PC-9 (cell line): ENCODE measurements at regions of chr7 and their contacts with region 1.

Region 1: GRCh38 chr7:134514663-134515062 is 12.7 kb upstream of the AKR1B10 start:
- DNase-seq: peak; percentile 35 to 78
- H3K4me3 ChIP-seq: no peak overlapping the region
- H3K27ac ChIP-seq: peak overlapping the region; percentile 94
- H3K4me1 ChIP-seq: peaks cover 69% of the 10 kb centered on the region
- H3K27me3 ChIP-seq: no peaks in the 10 kb centered on the region
- CTCF ChIP-seq: peak; percentile 97

Region 2: GRCh38 chr7:132705146-132705545 is 1809.5 kb before region 1 on chr7:
- CTCF ChIA-PET with region 1: interaction called, 12 read pairs
- POLR2A ChIA-PET with region 1: no interaction called
- intact Hi-C with region 1: no loop called
- DNase-seq: no peak
- H3K4me3 ChIP-seq: no peak overlapping the region
- H3K27ac ChIP-seq: no peak overlapping the region
- H3K4me1 ChIP-seq: no peaks in the 10 kb centered on the region
- H3K27me3 ChIP-seq: peaks cover 80% of the 10 kb centered on the region
- CTCF ChIP-seq: no peak

Region 3: GRCh38 chr7:134140889-134141867 is 373.5 kb before region 1 on chr7:
- CTCF ChIA-PET with region 1: interaction called, 3 read pairs
- POLR2A ChIA-PET with region 1: no interaction called
- intact Hi-C with region 1: loop called (anchors 5 kb)
- DNase-seq: peak; percentile 45 to 63
- H3K4me3 ChIP-seq: no peak overlapping the region
- H3K27ac ChIP-seq: no peak overlapping the region
- H3K4me1 ChIP-seq: no peaks in the 10 kb centered on the region
- H3K27me3 ChIP-seq: no peaks in the 10 kb centered on the region
- CTCF ChIP-seq: peak; percentile 94

Region 4: DNA sequence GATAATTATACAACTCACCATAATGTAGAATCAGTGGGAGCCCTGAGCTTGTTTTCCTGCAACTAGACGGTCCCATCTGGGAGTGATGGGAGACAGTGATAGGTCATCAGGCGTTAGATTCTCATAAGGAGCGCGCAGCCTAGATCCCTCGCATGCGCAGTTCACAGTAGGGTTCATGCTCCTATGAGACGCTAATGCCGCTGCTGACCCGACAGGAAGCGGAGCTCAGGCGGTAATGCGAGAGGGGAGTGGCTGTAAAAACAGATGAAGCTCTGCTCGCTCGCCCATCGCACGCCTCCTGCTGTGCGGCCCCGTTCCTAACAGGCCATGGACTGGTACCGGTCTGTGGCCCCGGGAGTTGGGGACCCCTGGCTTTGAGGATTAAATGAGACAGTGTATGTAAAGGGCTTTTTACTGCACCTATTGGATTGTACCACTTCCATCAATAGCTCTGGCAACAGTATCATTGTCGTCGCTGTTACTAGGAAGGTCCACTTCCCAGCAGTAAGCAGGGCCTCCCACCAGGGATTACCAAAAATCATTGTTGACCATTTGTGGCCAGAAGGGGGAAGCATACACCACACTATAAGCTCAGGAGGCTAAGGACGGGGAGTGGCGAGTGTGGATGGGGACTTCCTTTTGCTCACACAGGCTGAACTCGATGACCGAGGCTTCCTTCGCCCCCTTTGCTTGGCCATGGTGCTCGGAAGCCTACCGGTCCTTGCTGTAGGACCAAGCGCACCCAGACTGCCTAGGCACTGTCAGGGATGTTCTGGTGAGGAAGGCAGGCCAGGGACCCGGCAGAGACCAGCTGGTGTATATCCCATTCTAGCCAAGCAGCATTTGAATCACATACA is 82.1 kb before region 1 on chr7:
- CTCF ChIA-PET with region 1: interaction called, 33 read pairs
- POLR2A ChIA-PET with region 1: interaction called, 11 read pairs
- intact Hi-C with region 1: loop called (anchors 1 kb)
- DNase-seq: peak; percentile 88 to 91
- H3K4me3 ChIP-seq: peak overlapping the region; percentile 51
- H3K27ac ChIP-seq: peak overlapping the region; percentile 80
- H3K4me1 ChIP-seq: peaks cover 48% of the 10 kb centered on the region
- H3K27me3 ChIP-seq: no peaks in the 10 kb centered on the region
- CTCF ChIP-seq: peak; percentile 96

Region 5: GRCh38 chr7:134480736-134481135 is 33.9 kb before region 1 on chr7:
- CTCF ChIA-PET with region 1: interaction called, 4 read pairs
- POLR2A ChIA-PET with region 1: interaction called, 5 read pairs
- intact Hi-C with region 1: loop called (anchors 1 kb)
- DNase-seq: peak; percentile 59 to 94
- H3K4me3 ChIP-seq: peak overlapping the region; percentile 37; the same call in 1 of the 2 replicates
- H3K27ac ChIP-seq: peak overlapping the region; percentile 88
- H3K4me1 ChIP-seq: peaks cover 65% of the 10 kb centered on the region
- H3K27me3 ChIP-seq: no peaks in the 10 kb centered on the region
- CTCF ChIP-seq: no peak

Region 6: GRCh38 chr7:134570934-134571495 is 56.4 kb after region 1 on chr7:
- CTCF ChIA-PET with region 1: no interaction called
- POLR2A ChIA-PET with region 1: no interaction called
- intact Hi-C with region 1: no loop called
- DNase-seq: no peak
- H3K4me3 ChIP-seq: no peak overlapping the region
- H3K27ac ChIP-seq: no peak overlapping the region
- H3K4me1 ChIP-seq: peaks cover 2% of the 10 kb centered on the region
- H3K27me3 ChIP-seq: no peaks in the 10 kb centered on the region
- CTCF ChIP-seq: no peak

Region 7: GRCh38 chr7:134605973-134606923 is 91.6 kb after region 1 on chr7:
- CTCF ChIA-PET with region 1: interaction called, 11 read pairs
- POLR2A ChIA-PET with region 1: no interaction called
- intact Hi-C with region 1: loop called (anchors 1 kb)
- DNase-seq: peak; percentile 70 to 92
- H3K4me3 ChIP-seq: no peak overlapping the region
- H3K27ac ChIP-seq: peak overlapping the region; percentile 80
- H3K4me1 ChIP-seq: peaks cover 32% of the 10 kb centered on the region
- H3K27me3 ChIP-seq: no peaks in the 10 kb centered on the region
- CTCF ChIP-seq: peak; percentile 99

Region 8: GRCh38 chr7:134778941-134779740 is 264.5 kb after region 1 on chr7 and contains the start of gene CALD1:
- CTCF ChIA-PET with region 1: no interaction called
- POLR2A ChIA-PET with region 1: no interaction called
- intact Hi-C with region 1: no loop called
- DNase-seq: peak; percentile 90 to 96
- H3K4me3 ChIP-seq: peak within 1 kb of the TSS; percentile 56
- H3K27ac ChIP-seq: peak within 1 kb of the TSS; percentile 60
- H3K4me1 ChIP-seq: peaks cover 33% of the 10 kb centered on the region
- H3K27me3 ChIP-seq: no peaks in the 10 kb centered on the region
- CTCF ChIP-seq: no peak
- total RNA-seq, gene CALD1: 84.4 and 97.5 TPM in 2 replicates

Region 9: DNA sequence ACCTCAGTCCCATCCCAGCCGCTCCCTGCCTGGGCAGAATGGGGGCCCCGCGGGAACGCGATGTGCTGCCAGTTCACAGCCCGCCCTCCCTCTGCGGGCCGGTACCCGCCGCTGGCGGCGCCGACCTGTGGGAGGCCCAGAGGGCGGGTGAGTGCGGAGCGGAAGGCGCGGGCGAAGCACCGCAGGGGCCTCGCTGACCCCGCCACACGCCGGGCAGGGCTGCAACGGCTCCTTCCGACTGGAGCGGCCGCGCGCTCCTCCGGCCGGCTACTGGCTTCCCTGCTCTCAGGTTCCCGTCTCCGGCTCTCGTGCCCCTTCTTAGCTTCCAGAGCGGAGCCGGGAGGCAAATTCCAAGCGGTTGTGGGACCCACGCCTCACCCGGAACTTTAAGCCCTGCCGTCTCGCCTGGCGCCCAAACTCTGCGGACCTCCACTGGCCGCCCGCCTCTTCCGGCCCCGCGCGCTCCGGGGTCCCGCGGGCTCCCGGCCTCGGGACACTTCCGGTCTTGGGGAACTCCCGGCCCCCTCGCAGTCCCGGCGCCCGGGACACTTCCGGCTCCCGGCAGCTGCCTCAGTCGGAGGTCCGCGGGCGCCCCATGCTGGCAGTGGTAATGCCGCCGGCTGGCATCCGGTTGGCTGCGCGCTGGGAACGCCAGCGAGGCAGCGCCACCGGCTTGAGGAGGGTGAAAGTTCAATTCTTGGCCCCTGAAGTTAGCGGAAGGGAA is 655.8 kb after region 1 on chr7 and contains the start of gene CYREN:
- CTCF ChIA-PET with region 1: no interaction called
- POLR2A ChIA-PET with region 1: no interaction called
- intact Hi-C with region 1: loop called (anchors 10 kb)
- DNase-seq: peak; percentile 88 to 95
- H3K4me3 ChIP-seq: peak within 1 kb of the TSS; percentile 88
- H3K27ac ChIP-seq: peak within 1 kb of the TSS; percentile 81
- H3K4me1 ChIP-seq: peaks cover 19% of the 10 kb centered on the region
- H3K27me3 ChIP-seq: no peaks in the 10 kb centered on the region
- CTCF ChIP-seq: peak; percentile 73
- total RNA-seq, gene CYREN: 70.5 and 76.0 TPM in 2 replicates